ENCODE measurements at regions of chr1 and their contacts with region 1.

Region 1: GRCh38 chr1:1122078-1122811 is 6.4 kb upstream of the C1orf159 start:
- DNase-seq: peak; percentile 94

Region 2: GRCh38 chr1:1254667-1254998 is 132.4 kb after region 1 on chr1:
- intact Hi-C with region 1: loop called in 1 of 2 experiments (anchors 1 kb)
- DNase-seq: no peak

Measured in posterior vena cava (tissue), 2 donors.